ENCODE measurements at regions of chr2 and their contacts with region 1.

Region 1: GRCh38 chr2:24971536-24972314 is at the start of gene DNAJC27:
- DNase-seq: peak; percentile 99
- H3K4me3 ChIP-seq: peak within 1 kb of the TSS; percentile 57 to 79 (median 72)
- H3K27ac ChIP-seq: peak within 1 kb of the TSS; percentile 90
- H3K4me1 ChIP-seq: peaks cover 10% of the 10 kb centered on the region
- H3K27me3 ChIP-seq: no peaks in the 10 kb centered on the region
- CTCF ChIP-seq: peak in 1 of 2 donors; percentile 2
- POLR2A ChIP-seq: peak; percentile 93
- total RNA-seq, gene DNAJC27: 3.2 and 3.9 TPM in 2 replicates

Region 2: DNA sequence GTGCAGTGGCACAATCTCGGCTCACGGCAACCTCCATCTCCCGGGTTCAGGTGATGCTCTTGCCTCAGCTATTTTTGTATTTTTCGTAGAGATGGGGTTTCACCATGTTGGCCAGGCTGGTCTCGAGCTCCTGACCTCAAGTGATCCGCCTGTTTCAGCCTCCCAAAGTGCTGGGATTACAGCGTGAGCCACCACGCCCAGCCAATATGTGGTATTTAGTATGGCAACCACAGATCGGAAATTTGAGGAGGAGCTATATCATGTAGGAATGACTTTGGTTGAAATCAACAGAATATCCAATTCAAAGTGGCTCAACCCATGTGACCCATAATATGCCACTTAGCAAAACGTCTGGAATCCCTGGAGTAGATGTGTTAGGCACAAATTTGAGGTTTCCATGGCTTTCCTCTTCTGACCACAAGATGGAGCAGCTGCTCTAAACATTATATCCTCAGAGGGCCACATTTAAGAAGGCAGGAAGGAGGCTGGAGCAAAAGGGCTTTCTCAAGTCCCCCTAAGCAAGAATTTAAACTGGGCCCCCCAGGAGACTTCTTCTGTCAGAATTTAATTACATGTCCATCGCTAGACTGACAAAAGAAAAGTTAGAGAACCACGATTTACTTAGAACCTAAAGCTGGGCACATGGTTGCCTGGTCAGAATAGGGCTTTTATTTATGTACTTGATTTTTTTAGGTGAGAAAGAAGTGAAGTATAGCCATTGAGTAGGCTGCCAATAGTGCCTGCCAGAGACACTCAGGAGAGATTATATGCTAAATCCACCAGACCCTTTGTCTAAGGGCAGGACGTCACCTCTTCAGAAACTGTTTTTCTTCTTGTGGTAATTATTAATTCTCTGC is 561.8 kb before region 1 on chr2:
- CTCF ChIA-PET with region 1: interaction called, 8 read pairs
- POLR2A ChIA-PET with region 1: no interaction called
- dilution Hi-C with region 1: no loop called
- intact Hi-C with region 1: loop called (anchors 2 kb)
- DNase-seq: peak; percentile 68
- H3K4me3 ChIP-seq: no peak overlapping the region
- H3K27ac ChIP-seq: no peak overlapping the region
- H3K4me1 ChIP-seq: no peaks in the 10 kb centered on the region
- H3K27me3 ChIP-seq: no peaks in the 10 kb centered on the region
- CTCF ChIP-seq: peak; percentile 69 to 74
- POLR2A ChIP-seq: no peak

Region 3: GRCh38 chr2:24984912-24985311 is 13.2 kb after region 1 on chr2:
- CTCF ChIA-PET with region 1: interaction called, 20 read pairs
- POLR2A ChIA-PET with region 1: no interaction called
- dilution Hi-C with region 1: no loop called
- intact Hi-C with region 1: no loop called
- DNase-seq: no peak
- H3K4me3 ChIP-seq: no peak overlapping the region
- H3K27ac ChIP-seq: no peak overlapping the region
- H3K4me1 ChIP-seq: no peaks in the 10 kb centered on the region
- H3K27me3 ChIP-seq: peaks cover 8 to 15% of the 10 kb centered on the region in 2 experiments
- CTCF ChIP-seq: no peak
- POLR2A ChIP-seq: no peak

Region 4: GRCh38 chr2:25078171-25079049 is 106.7 kb after region 1 on chr2:
- CTCF ChIA-PET with region 1: interaction called, 12 read pairs
- POLR2A ChIA-PET with region 1: no interaction called
- dilution Hi-C with region 1: no loop called
- intact Hi-C with region 1: no loop called
- DNase-seq: peak; percentile 88
- H3K4me3 ChIP-seq: no peak overlapping the region
- H3K27ac ChIP-seq: no peak overlapping the region
- H3K4me1 ChIP-seq: peaks cover 12% of the 10 kb centered on the region
- H3K27me3 ChIP-seq: peaks cover 2 to 9% of the 10 kb centered on the region in 2 experiments
- CTCF ChIP-seq: no peak
- POLR2A ChIP-seq: peak; percentile 19

Region 5: DNA sequence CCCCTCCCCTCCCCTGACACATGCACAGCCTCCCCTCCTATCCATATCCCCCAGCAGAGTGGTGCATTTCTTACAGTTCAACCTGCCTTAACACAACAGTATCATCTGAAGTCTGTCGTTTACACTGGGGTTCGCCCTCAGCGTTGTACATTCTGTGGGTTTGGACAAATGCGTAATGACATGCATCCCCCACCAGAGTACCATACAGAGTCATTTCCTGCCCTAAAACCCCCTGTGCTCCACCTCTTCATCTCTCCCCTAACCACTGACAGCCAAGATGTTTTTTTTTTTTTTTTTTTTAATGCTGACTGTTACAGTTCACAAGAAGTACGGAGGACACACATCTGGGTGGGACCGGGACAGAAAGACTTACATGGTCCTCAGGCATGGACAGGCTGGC is 174.1 kb after region 1 on chr2:
- CTCF ChIA-PET with region 1: interaction called, 10 read pairs
- POLR2A ChIA-PET with region 1: no interaction called
- dilution Hi-C with region 1: no loop called
- intact Hi-C with region 1: no loop called
- DNase-seq: no peak
- H3K4me3 ChIP-seq: no peak overlapping the region
- H3K27ac ChIP-seq: no peak overlapping the region
- H3K4me1 ChIP-seq: no peaks in the 10 kb centered on the region
- H3K27me3 ChIP-seq: no peaks in the 10 kb centered on the region
- CTCF ChIP-seq: no peak
- POLR2A ChIP-seq: no peak

Region 6: DNA sequence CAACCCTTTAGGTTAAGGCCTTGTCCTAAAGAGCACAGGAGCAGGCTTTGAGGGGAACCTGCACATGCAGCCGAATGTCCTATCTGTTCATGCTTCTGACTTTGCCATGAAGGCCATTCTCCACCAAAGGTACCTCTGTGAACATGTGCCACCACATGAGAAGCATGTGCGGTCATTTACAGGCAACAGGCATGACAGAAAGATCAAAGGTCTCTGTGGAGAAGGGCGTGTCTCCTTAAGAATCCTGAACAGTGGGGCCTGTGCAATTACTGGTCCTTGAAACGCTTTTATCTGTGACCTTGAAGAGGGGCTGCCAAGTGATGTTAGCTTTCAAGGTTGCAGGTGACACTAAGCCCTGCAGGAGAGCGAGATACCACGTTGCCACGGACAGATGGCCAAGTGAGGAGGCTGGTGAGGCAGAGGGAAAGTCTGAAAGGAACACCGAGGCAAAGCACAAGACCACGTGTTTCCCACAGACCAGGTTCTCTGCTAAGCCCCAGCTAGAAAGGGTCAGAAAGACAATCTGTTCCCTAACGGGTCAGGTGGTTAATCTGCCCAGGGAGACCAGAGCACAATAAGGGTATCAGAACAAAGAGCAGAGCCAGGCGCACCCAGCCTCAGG is 216.1 kb after region 1 on chr2:
- CTCF ChIA-PET with region 1: interaction called, 13 read pairs
- POLR2A ChIA-PET with region 1: no interaction called
- dilution Hi-C with region 1: no loop called
- intact Hi-C with region 1: no loop called
- DNase-seq: no peak
- H3K4me3 ChIP-seq: no peak overlapping the region
- H3K27ac ChIP-seq: no peak overlapping the region
- H3K4me1 ChIP-seq: no peaks in the 10 kb centered on the region
- H3K27me3 ChIP-seq: peaks cover 2 to 3% of the 10 kb centered on the region in 2 experiments
- CTCF ChIP-seq: no peak
- POLR2A ChIP-seq: no peak

Region 7: GRCh38 chr2:25228848-25229278 is 257.1 kb after region 1 on chr2:
- CTCF ChIA-PET with region 1: interaction called, 29 read pairs
- POLR2A ChIA-PET with region 1: no interaction called
- dilution Hi-C with region 1: no loop called
- intact Hi-C with region 1: loop called (anchors 1 kb)
- DNase-seq: peak; percentile 72
- H3K4me3 ChIP-seq: no peak overlapping the region
- H3K27ac ChIP-seq: no peak overlapping the region
- H3K4me1 ChIP-seq: no peaks in the 10 kb centered on the region
- H3K27me3 ChIP-seq: no peaks in the 10 kb centered on the region
- CTCF ChIP-seq: peak; percentile 68 to 85
- POLR2A ChIP-seq: no peak